GM12878 (cell line): ENCODE measurements at regions of chr6 and their contacts with region 1.

Region 1: DNA sequence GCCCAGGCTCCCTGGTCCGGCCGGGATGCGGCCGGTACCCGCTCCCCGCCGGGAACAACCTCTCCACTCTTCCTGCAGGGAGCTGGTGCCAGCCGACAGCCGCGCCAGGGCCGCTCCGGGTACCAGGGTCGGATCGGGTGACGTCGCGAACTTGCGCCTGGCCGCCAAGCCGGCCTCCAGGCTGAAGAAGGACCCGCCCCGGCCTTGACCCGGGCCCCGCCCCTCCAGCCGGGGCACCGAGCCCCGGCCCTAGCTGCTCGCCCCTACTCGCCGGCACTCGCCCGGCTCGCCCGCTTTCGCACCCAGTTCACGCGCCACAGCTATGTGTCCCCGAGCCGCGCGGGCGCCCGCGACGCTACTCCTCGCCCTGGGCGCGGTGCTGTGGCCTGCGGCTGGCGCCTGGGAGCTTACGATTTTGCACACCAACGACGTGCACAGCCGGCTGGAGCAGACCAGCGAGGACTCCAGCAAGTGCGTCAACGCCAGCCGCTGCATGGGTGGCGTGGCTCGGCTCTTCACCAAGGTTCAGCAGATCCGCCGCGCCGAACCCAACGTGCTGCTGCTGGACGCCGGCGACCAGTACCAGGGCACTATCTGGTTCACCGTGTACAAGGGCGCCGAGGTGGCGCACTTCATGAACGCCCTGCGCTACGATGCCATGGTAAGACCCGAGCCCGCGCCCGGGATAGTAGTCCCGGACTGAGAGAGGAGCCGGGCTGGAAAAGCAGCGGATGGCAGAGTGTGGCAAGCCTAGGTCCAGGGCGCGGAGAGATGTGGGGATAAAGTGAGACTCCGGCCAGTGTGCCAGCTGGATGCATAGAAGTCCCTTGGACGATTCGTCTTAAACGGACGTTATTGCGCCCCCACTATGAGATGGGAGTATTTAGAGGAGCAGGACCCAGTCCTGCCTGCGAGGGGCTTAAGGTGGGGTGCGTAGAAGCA is at the start of gene NT5E:
- DNase-seq: no peak
- ATAC-seq: peak; percentile 88
- H3K4me3 ChIP-seq: peak within 1 kb of the TSS; percentile 83
- H3K27ac ChIP-seq: peak within 1 kb of the TSS; percentile 81
- H3K4me1 ChIP-seq: peaks cover 19% of the 10 kb centered on the region
- H3K27me3 ChIP-seq: no peaks in the 10 kb centered on the region
- CTCF ChIP-seq: peak in 2 of 3 experiments; percentile 14 to 20; a peak in 1 of 6 replicates
- EP300 ChIP-seq: no peak
- POLR2A ChIP-seq: peak; percentile 79
- RAD21 ChIP-seq: 0 out of 2 replicates have a peak, but pooled peaks have one; percentile 4
- polyA plus RNA-seq, gene NT5E: 1.9 to 3.9 TPM

Region 2: DNA sequence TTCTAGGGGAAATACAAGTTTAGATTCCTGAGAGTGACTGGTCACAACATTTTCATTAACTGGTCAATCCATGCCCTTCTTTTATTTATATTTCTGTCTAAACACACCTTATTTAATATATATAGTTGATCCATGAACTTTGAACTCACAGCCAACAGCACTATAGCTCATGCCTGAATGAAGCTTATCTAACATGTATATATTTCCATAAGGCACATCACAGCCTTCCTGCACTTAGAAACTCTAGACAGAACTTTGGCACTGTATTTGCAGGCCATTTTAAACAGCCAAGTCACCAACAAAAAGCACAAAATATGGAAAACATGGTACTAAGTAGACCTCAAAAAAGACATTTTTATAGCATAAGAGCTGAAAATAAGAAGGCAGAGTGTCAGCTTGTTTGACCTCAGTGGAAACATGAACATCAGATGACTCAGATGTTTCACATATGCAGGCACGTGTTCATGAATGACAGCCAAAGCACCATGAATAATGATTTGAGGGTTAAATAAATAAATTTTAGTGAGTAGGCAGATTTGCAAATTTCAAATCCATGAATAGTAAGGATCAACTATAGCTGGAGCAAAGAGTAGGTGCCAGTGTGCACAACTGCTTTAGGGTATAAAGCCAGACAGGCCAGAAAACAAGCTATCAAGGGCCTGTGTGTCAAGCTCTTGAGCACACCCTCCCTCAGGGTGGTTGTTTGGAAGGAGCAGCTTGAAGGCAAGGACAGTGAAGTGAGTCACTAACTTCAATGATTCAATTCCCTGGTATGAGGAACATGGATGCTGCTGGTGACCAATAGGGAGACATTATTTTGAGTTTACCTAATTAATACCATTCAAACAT is 89.1 kb before region 1 on chr6:
- CTCF ChIA-PET with region 1: interaction called, 7 read pairs
- POLR2A ChIA-PET with region 1: no interaction called
- RAD21 ChIA-PET with region 1: interaction called, 5 read pairs
- SMC1A ChIA-PET with region 1: interaction called, 26 read pairs
- in situ Hi-C with region 1: no loop called
- intact Hi-C with region 1: no loop called
- DNase-seq: no peak
- ATAC-seq: peak; percentile 31; the same call in 1 of the 3 replicates
- H3K4me3 ChIP-seq: no peak overlapping the region
- H3K27ac ChIP-seq: no peak overlapping the region
- H3K4me1 ChIP-seq: no peaks in the 10 kb centered on the region
- H3K27me3 ChIP-seq: no peaks in the 10 kb centered on the region
- CTCF ChIP-seq: no peak
- EP300 ChIP-seq: no peak
- POLR2A ChIP-seq: no peak
- RAD21 ChIP-seq: no peak

Region 3: GRCh38 chr6:85404502-85405174 is 45.5 kb before region 1 on chr6:
- CTCF ChIA-PET with region 1: interaction called, 12 read pairs
- POLR2A ChIA-PET with region 1: interaction called, 50 read pairs
- RAD21 ChIA-PET with region 1: interaction called, 48 read pairs
- SMC1A ChIA-PET with region 1: interaction called, 79 read pairs
- in situ Hi-C with region 1: no loop called
- intact Hi-C with region 1: loop called (anchors 2 kb)
- DNase-seq: no peak
- ATAC-seq: peak; percentile 11; the same call in 2 of the 3 replicates
- H3K4me3 ChIP-seq: no peak overlapping the region
- H3K27ac ChIP-seq: no peak overlapping the region
- H3K4me1 ChIP-seq: peaks cover 20% of the 10 kb centered on the region
- H3K27me3 ChIP-seq: no peaks in the 10 kb centered on the region
- CTCF ChIP-seq: no peak
- EP300 ChIP-seq: no peak
- POLR2A ChIP-seq: no peak
- RAD21 ChIP-seq: no peak

Region 4: GRCh38 chr6:85460921-85461797 is 11.1 kb after region 1 on chr6:
- CTCF ChIA-PET with region 1: interaction called, 33 read pairs
- POLR2A ChIA-PET with region 1: interaction called, 64 read pairs
- RAD21 ChIA-PET with region 1: interaction called, 76 read pairs
- SMC1A ChIA-PET with region 1: interaction called, 138 read pairs
- in situ Hi-C with region 1: no loop called
- intact Hi-C with region 1: no loop called
- DNase-seq: peak; percentile 85
- ATAC-seq: peak; percentile 84
- H3K4me3 ChIP-seq: no peak overlapping the region; the same call in 1 of the 2 replicates
- H3K27ac ChIP-seq: peak overlapping the region; percentile 74
- H3K4me1 ChIP-seq: peaks cover 59% of the 10 kb centered on the region
- H3K27me3 ChIP-seq: no peaks in the 10 kb centered on the region
- CTCF ChIP-seq: no peak
- EP300 ChIP-seq: peak; percentile 89 to 92
- POLR2A ChIP-seq: no peak
- RAD21 ChIP-seq: peak; percentile 10; the same call in 1 of the 2 replicates

Region 5: GRCh38 chr6:85678602-85679444 is 228.7 kb after region 1 on chr6:
- CTCF ChIA-PET with region 1: no interaction called
- POLR2A ChIA-PET with region 1: interaction called, 4 read pairs
- RAD21 ChIA-PET with region 1: interaction called, 13 read pairs
- SMC1A ChIA-PET with region 1: interaction called, 4 read pairs
- in situ Hi-C with region 1: no loop called
- intact Hi-C with region 1: loop called (anchors 5 kb)
- DNase-seq: peak; percentile 93
- ATAC-seq: peak; percentile 81
- H3K4me3 ChIP-seq: peak overlapping the region; percentile 89
- H3K27ac ChIP-seq: peak overlapping the region; percentile 92
- H3K4me1 ChIP-seq: peaks cover 13% of the 10 kb centered on the region
- H3K27me3 ChIP-seq: no peaks in the 10 kb centered on the region
- CTCF ChIP-seq: no peak
- EP300 ChIP-seq: no peak
- POLR2A ChIP-seq: peak; percentile 100
- RAD21 ChIP-seq: peak; percentile 19; the same call in 1 of the 2 replicates